ENCODE measurements at regions of chr22 and their contacts with region 1.

Region 1: GRCh38 chr22:48492366-48493320 is 1335.0 kb downstream of the BRD1 start:
- DNase-seq: peak; percentile 63
- ATAC-seq: peak; percentile 63
- H3K4me3 Mint-ChIP-seq: no peak overlapping the region
- H3K27ac Mint-ChIP-seq: no peak overlapping the region
- H3K4me1 Mint-ChIP-seq: no peaks in the 10 kb centered on the region
- H3K27me3 Mint-ChIP-seq: peaks cover 48% of the 10 kb centered on the region

Region 2: DNA sequence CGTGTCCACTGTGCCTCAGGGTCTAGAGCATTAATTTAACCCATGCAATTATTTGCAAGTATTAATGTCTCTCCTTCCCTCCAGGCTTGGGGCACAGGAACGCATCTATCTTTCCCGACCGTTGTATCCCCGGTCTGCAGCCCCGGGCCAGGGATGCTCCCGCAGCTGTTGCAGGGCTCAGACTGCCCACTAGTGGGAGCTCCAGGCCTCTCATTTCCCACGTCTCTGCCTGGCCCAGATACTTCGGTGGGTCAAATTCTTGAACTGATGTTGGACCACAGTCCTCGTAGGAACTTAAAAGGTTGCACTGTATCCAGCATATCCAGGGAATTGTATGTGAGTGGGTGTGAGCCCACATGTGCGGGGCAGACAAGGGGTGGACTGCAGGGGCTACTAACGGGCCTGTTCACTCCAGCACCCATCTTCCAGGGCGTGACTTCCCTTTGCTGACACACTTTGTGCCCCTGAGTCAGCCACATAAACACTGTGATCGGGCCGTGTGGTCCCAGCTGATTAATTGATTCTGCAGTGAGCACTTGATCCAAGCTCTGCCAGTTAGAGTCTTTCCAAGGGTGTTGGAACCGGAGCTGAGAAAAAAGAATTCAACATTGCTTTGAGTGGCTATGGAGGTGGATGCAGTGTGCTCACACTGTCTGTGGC is 1278.9 kb before region 1 on chr22:
- CTCF ChIA-PET with region 1: no interaction called
- POLR2A ChIA-PET with region 1: no interaction called
- intact Hi-C with region 1: loop called in 1 of 2 experiments (anchors 2 kb)
- DNase-seq: peak; percentile 79
- ATAC-seq: peak; percentile 80
- H3K4me3 Mint-ChIP-seq: no peak overlapping the region
- H3K27ac Mint-ChIP-seq: no peak overlapping the region
- H3K4me1 Mint-ChIP-seq: no peaks in the 10 kb centered on the region
- H3K27me3 Mint-ChIP-seq: no peaks in the 10 kb centered on the region

Region 3: GRCh38 chr22:50101870-50102565 is 1609.4 kb after region 1 on chr22:
- CTCF ChIA-PET with region 1: no interaction called
- POLR2A ChIA-PET with region 1: no interaction called
- intact Hi-C with region 1: no loop called
- DNase-seq: no peak
- ATAC-seq: no peak
- H3K4me3 Mint-ChIP-seq: no peak overlapping the region
- H3K27ac Mint-ChIP-seq: no peak overlapping the region
- H3K4me1 Mint-ChIP-seq: peaks cover 8% of the 10 kb centered on the region
- H3K27me3 Mint-ChIP-seq: peaks cover 8% of the 10 kb centered on the region